HEK293 (cell line): ENCODE measurements at regions of chr2 and their contacts with region 1.

Region 1: DNA sequence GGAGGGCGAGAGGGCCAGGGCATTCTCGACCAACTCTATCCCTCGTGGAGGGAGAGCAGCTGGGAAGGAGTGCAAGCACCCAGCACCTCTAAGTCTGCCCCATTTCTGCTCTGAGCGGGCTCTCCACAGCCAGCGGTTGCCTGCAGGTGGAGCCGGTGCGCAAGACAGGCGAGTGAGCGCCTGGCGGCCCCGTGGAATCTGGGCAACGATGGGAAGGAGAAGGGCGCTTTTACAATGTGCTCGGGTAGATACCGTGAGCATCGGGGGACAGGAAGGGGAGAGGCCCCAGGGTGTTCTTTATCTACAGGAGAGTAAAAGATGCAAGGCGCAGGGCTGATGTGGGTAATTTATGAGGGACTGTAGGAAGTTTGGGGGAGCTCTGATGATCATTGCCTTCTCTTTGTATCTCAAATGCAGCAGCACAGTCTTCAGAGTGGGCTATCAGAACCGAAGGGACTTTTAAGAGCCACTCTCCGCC is 867 bp upstream of the TTL start:
- H3K4me3 ChIP-seq: peak overlapping the region; percentile 83
- H3K27ac ChIP-seq: peak overlapping the region; percentile 76
- H3K4me1 ChIP-seq: peaks cover 3% of the 10 kb centered on the region; the same call in 1 of the 2 replicates
- CTCF ChIP-seq: peak; percentile 81

Region 2: GRCh38 chr2:112054847-112055729 is 426.0 kb before region 1 on chr2 and contains the start of gene TMEM87B:
- CTCF ChIA-PET with region 1: no interaction called
- POLR2A ChIA-PET with region 1: no interaction called
- H3K4me3 ChIP-seq: peak within 1 kb of the TSS; percentile 86
- H3K27ac ChIP-seq: peak within 1 kb of the TSS; percentile 87
- H3K4me1 ChIP-seq: peaks cover 6% of the 10 kb centered on the region
- CTCF ChIP-seq: no peak

Region 3: DNA sequence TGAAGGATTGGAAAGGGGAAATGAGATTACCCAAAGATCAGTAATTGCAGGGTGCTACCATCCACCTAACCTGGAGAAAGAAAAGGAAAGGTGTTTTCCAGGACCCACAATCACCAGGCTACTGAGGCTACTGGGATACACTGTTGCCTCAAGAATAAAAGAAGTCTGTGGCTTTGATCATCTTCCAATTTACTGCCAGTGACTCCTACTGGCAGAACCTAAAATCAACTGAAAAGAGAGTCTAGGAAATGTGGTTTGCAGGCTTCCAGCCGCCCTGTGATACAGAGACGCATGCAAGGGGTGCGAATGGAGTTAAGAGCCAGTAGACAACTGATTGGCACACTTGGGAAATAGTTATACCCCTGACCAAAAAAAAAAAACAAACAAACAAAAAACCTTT is 15.7 kb before region 1 on chr2:
- CTCF ChIA-PET with region 1: interaction called, 12 read pairs
- POLR2A ChIA-PET with region 1: interaction called, 4 read pairs
- H3K4me3 ChIP-seq: no peak overlapping the region
- H3K27ac ChIP-seq: no peak overlapping the region
- H3K4me1 ChIP-seq: no peaks in the 10 kb centered on the region
- CTCF ChIP-seq: no peak

Region 4: DNA sequence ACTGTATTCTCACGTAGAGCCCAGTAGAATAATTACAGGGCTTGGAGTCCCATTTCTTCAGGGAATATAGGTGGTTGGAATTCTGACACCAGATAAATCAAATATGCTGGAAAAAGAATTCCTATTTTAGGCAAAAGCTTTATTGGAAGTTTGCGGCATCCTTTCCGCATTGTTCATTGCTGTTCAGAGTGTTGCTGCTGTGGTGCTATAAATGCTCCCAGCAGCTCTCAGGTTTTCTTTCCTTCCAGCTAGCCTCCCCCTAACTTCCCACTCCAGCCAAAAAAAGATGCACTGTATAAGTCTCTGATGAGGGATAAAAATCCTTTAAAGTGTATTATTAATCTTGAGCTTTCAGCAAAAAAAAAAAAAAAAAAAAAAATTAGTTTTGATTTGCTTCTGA is 35.7 kb after region 1 on chr2:
- CTCF ChIA-PET with region 1: no interaction called
- POLR2A ChIA-PET with region 1: no interaction called
- H3K4me3 ChIP-seq: no peak overlapping the region
- H3K27ac ChIP-seq: no peak overlapping the region
- H3K4me1 ChIP-seq: no peaks in the 10 kb centered on the region
- CTCF ChIP-seq: no peak

Region 5: GRCh38 chr2:112606488-112606902 is 125.4 kb after region 1 on chr2:
- CTCF ChIA-PET with region 1: no interaction called
- POLR2A ChIA-PET with region 1: no interaction called
- H3K4me3 ChIP-seq: no peak overlapping the region
- H3K27ac ChIP-seq: no peak overlapping the region
- H3K4me1 ChIP-seq: no peaks in the 10 kb centered on the region
- CTCF ChIP-seq: no peak